GM10248 (cell line): ENCODE measurements at regions of chr9 and their contacts with region 1.

Region 1: GRCh38 chr9:76704593-76705204 is 59.5 kb upstream of the PCA3 start:
- DNase-seq: peak; percentile 42
- CTCF ChIP-seq: peak; percentile 59

Region 2: GRCh38 chr9:76403352-76403751 is 301.3 kb before region 1 on chr9:
- CTCF ChIA-PET with region 1: interaction called, 15 read pairs
- POLR2A ChIA-PET with region 1: no interaction called
- DNase-seq: peak; percentile 48
- CTCF ChIP-seq: peak; percentile 50

Region 3: GRCh38 chr9:76448501-76448900 is 256.2 kb before region 1 on chr9:
- CTCF ChIA-PET with region 1: interaction called, 25 read pairs
- POLR2A ChIA-PET with region 1: no interaction called
- DNase-seq: no peak
- CTCF ChIP-seq: no peak

Region 4: DNA sequence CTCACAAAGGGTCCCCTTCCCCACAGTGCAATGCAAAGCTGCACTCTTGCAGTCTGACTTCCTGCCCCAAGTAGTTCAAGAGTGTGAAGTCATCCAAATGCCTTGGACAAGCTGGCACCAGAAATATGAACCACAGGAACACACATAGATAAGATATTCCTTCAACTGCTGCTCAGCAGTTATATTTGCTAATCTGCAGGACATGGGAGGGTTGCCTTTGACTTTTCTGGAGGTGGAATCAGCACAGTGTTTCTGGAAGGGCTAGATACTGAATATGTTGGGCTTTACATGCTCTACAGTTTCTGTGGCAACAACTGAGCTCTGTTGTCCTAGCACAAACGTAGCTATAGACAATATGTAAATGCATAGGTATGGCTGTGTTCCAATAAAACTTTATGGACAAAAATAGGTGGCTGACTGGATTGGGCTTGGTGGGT is 37.2 kb before region 1 on chr9:
- CTCF ChIA-PET with region 1: interaction called, 42 read pairs
- POLR2A ChIA-PET with region 1: interaction called, 3 read pairs
- DNase-seq: no peak
- CTCF ChIP-seq: no peak

Region 5: GRCh38 chr9:76932757-76933156 is 228.1 kb after region 1 on chr9:
- CTCF ChIA-PET with region 1: no interaction called
- POLR2A ChIA-PET with region 1: interaction called, 10 read pairs
- DNase-seq: no peak
- CTCF ChIP-seq: no peak

Region 6: GRCh38 chr9:77417566-77417965 is 712.9 kb after region 1 on chr9:
- CTCF ChIA-PET with region 1: no interaction called
- POLR2A ChIA-PET with region 1: no interaction called
- DNase-seq: no peak
- CTCF ChIP-seq: no peak